ENCODE measurements at regions of chr6 and their contacts with region 1.

Region 1: GRCh38 chr6:29847871-29848630 is 20.4 kb downstream of the HLA-G start:
- DNase-seq: peak; percentile 95
- H3K4me3 Mint-ChIP-seq: no peak overlapping the region
- H3K27ac Mint-ChIP-seq: no peak overlapping the region
- H3K4me1 Mint-ChIP-seq: peaks cover 26% of the 10 kb centered on the region
- H3K27me3 Mint-ChIP-seq: peaks cover 55% of the 10 kb centered on the region

Region 2: GRCh38 chr6:30013291-30013922 is 165.4 kb after region 1 on chr6:
- intact Hi-C with region 1: loop called (anchors 1 kb)
- DNase-seq: peak; percentile 87
- H3K4me3 Mint-ChIP-seq: no peak overlapping the region
- H3K27ac Mint-ChIP-seq: no peak overlapping the region
- H3K4me1 Mint-ChIP-seq: no peaks in the 10 kb centered on the region
- H3K27me3 Mint-ChIP-seq: peaks cover 5% of the 10 kb centered on the region

Region 3: DNA sequence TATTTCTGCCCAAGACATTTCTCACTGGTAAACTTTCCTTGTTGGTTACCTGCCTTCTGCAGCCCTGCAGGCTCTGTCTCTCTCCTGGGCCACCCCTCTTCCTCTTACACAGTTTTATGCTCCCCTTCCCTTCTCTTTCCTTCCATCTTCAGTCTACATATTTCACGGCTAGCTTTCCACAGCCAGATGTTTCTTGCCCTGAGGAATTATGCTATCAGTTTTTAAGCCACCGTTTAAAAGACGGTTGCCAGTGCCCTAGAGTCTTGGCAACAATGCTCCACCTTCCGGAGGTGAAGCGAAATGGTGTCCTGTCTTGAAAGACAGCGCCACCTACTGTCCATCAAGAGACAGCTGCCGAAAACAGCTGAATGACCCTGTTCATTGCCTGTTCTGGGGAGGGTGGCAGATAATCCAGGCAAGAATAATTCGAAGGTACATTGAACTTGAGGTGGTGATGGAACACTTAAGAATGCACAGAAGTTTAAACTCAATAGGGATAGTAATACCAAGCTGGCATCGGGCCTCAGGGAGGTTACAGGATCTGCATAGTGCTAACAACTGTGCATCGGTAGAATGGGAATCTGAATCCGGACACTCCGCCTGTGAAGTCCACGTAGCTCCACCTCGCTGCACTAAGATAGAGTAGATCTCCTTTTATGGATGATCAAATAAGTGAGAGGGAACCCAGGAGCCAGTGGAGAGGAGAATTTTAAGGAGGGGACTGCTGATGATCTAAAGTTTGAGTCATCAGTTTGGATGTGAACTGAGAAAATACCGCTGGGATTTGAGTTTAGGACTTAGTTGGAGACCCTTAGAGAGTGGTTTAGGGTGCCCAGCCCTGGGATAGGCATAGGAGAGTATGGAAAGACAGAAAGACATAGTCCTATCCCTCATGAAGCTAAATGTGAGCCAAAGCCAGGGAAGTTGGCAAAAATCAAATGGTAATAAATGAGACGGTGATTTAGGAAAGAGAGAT is 283.1 kb after region 1 on chr6:
- intact Hi-C with region 1: loop called (anchors 2 kb)
- DNase-seq: peak; percentile 91
- H3K4me3 Mint-ChIP-seq: peak overlapping the region; percentile 2
- H3K27ac Mint-ChIP-seq: no peak overlapping the region
- H3K4me1 Mint-ChIP-seq: peaks cover 19% of the 10 kb centered on the region
- H3K27me3 Mint-ChIP-seq: peaks cover 60% of the 10 kb centered on the region

Region 4: GRCh38 chr6:30169658-30170614 is 321.9 kb after region 1 on chr6:
- intact Hi-C with region 1: loop called (anchors 2 kb)
- DNase-seq: peak; percentile 81
- H3K4me3 Mint-ChIP-seq: no peak overlapping the region
- H3K27ac Mint-ChIP-seq: no peak overlapping the region
- H3K4me1 Mint-ChIP-seq: peaks cover 29% of the 10 kb centered on the region
- H3K27me3 Mint-ChIP-seq: peaks cover 30% of the 10 kb centered on the region

Region 5: DNA sequence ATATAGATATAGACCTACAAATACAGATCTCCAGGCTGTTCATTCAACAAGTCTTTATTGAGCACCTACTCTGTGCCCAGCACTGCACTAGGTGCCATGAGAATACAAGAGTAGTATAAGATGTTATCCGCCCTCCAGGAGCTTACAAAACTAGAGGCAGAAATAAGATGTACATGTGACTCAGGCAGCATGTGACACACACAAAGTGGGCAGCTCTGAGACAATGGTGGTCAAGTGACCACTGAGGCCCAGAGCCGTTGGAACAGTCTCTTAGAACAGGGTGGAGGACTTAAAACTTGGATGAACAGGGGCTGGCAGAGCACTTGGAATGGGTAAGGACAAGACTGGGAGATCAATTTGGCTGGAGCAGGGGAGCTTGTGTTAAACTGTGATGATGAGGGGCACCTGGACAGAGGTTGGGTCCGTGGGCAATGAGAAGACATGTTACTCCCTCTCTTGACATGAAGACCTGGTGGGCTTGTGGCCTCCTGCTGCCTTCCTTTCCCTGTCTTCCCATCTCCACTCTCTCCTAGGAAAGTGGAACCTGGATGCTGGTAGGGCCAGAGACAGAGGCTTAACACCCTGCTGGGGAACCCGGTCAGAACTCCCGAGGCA is 336.5 kb after region 1 on chr6:
- intact Hi-C with region 1: no loop called
- DNase-seq: no peak
- H3K4me3 Mint-ChIP-seq: no peak overlapping the region
- H3K27ac Mint-ChIP-seq: no peak overlapping the region
- H3K4me1 Mint-ChIP-seq: no peaks in the 10 kb centered on the region
- H3K27me3 Mint-ChIP-seq: peaks cover 3% of the 10 kb centered on the region

Measured in activated CD4-positive, alpha-beta T cell treated with anti-CD3 and anti-CD28 coated beads, Interleukin-2, amount 10 ng/mL, durations not matched to agents 24 days and 14 days (primary cell).